ENCODE measurements at regions of chr7 and their contacts with region 1.

Region 1: DNA sequence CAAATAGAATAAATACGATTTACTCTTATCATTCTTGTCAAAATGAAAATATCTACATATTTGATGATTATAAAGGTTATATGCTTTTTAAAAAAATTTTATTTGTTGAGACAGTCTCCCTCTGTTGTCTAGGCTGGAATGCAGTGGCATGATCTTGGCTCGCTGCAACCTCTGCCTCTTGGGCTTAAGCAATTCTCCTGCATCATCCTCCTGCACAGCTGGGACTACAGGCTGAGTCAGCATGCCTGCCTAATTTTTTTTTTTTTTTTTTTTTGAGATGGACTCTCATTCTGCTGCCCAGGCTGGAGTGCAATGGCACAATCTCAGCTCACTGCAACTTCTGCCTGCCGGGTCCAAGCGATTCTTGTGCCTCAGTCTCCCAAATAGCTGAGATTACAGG is 48.9 kb downstream of the PUS7 start:
- DNase-seq: no peak
- H3K4me3 ChIP-seq: no peak overlapping the region
- H3K27ac ChIP-seq: no peak overlapping the region
- H3K4me1 ChIP-seq: no peaks in the 10 kb centered on the region
- H3K27me3 ChIP-seq: no peaks in the 10 kb centered on the region
- CTCF ChIP-seq: no peak
- POLR2A ChIP-seq: no peak

Region 2: DNA sequence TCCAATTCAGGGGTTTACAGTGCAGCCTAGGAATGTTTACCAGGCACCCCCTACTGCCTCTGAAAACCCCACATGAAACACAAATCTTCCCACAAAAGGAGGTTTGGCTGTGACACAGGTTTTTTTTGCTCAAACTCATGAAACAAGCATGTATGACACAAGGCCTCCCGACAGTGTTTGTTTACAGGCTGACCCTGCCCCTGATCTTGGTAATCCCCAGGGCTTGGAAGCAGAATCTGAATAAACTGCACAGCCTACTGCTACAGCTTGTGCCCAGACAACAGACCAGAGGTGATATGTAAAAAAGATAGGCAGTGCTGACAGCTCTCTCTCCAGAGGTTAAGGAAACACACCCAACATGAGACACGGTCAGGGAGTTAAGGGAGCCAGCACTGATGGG is 274.9 kb before region 1 on chr7:
- intact Hi-C with region 1: no loop called
- DNase-seq: no peak
- H3K4me3 ChIP-seq: no peak overlapping the region
- H3K27ac ChIP-seq: no peak overlapping the region
- H3K4me1 ChIP-seq: no peaks in the 10 kb centered on the region
- H3K27me3 ChIP-seq: no peaks in the 10 kb centered on the region
- CTCF ChIP-seq: no peak
- POLR2A ChIP-seq: no peak

Region 3: DNA sequence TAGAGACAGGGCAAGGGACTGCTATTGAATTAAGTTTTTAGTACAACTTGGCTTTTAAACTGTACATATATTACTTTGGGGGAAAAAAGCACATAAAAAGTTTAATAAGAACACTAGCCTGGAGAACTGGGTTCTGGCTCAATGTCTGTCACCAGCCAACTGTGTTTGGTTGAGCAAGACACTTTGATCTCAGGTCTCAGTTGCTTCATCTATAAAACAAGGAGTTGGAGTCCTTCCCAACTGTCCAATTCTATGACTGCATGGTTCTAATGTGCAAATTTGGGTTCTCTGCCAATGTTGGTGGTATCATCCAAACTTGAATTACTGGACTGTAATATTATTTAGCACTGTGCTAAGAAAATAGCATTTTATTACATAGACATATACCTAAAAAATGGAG is 353.0 kb after region 1 on chr7:
- intact Hi-C with region 1: loop called (anchors 10 kb)
- DNase-seq: no peak
- H3K4me3 ChIP-seq: no peak overlapping the region
- H3K27ac ChIP-seq: no peak overlapping the region
- H3K4me1 ChIP-seq: no peaks in the 10 kb centered on the region
- H3K27me3 ChIP-seq: no peaks in the 10 kb centered on the region
- CTCF ChIP-seq: no peak
- POLR2A ChIP-seq: no peak